Endothelial cell of umbilical vein (primary cell): ENCODE measurements at regions of chr15 and their contacts with region 1.

Region 1: GRCh38 chr15:101578437-101578894 is 73.7 kb downstream of the TM2D3 start:
- DNase-seq: no peak
- H3K4me3 ChIP-seq: no peak overlapping the region
- H3K27ac ChIP-seq: no peak overlapping the region
- H3K4me1 ChIP-seq: peaks cover 15% of the 10 kb centered on the region
- H3K27me3 ChIP-seq: peaks cover 0 to 2% of the 10 kb centered on the region in 2 experiments
- CTCF ChIP-seq: peak in 1 of 2 donors; percentile 31
- POLR2A ChIP-seq: no peak

Region 2: DNA sequence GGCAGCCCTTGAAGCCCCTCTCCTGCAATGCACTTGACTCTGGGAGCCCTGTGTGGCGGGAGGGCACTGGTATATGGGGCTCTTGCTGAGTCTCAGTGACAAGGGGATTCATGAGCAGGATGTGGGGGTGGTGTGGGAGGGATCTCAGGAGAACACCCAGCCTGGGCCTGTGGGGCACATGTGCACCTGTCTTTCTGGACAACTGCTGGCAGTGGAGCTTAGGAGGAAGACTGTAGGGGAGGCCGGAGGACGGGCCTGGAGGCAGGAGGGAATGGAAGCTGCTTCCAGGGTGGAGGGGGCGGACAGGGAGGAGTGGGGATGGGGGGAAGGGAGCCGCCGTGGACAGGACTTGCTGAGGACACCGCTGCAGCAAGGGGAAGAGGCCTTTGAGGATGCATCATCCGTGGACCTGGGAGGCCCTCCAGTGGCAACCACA is 272.6 kb before region 1 on chr15:
- CTCF ChIA-PET with region 1: interaction called, 4 read pairs
- POLR2A ChIA-PET with region 1: no interaction called
- dilution Hi-C with region 1: no loop called
- intact Hi-C with region 1: loop called (anchors 5 kb)
- DNase-seq: no peak
- H3K4me3 ChIP-seq: no peak overlapping the region
- H3K27ac ChIP-seq: no peak overlapping the region
- H3K4me1 ChIP-seq: no peaks in the 10 kb centered on the region
- H3K27me3 ChIP-seq: no peaks in the 10 kb centered on the region
- CTCF ChIP-seq: no peak
- POLR2A ChIP-seq: no peak

Region 3: GRCh38 chr15:101542306-101543025 is 36.0 kb before region 1 on chr15:
- CTCF ChIA-PET with region 1: no interaction called
- POLR2A ChIA-PET with region 1: no interaction called
- dilution Hi-C with region 1: no loop called
- intact Hi-C with region 1: no loop called
- DNase-seq: no peak
- H3K4me3 ChIP-seq: no peak overlapping the region
- H3K27ac ChIP-seq: no peak overlapping the region
- H3K4me1 ChIP-seq: no peaks in the 10 kb centered on the region
- H3K27me3 ChIP-seq: peaks cover 0 to 1% of the 10 kb centered on the region in 2 experiments
- CTCF ChIP-seq: no peak
- POLR2A ChIP-seq: no peak